OCI-LY7 (cell line): ENCODE measurements at regions of chr4 and their contacts with region 1.

Region 1: GRCh38 chr4:94207469-94208224 is at the start of gene SMARCAD1:
- DNase-seq: peak; percentile 95
- H3K4me3 ChIP-seq: peak within 1 kb of the TSS; percentile 73
- H3K27ac ChIP-seq: peak within 1 kb of the TSS; percentile 69
- H3K4me1 ChIP-seq: peaks cover 15% of the 10 kb centered on the region
- CTCF ChIP-seq: no peak
- total RNA-seq, gene SMARCAD1: 29.9 and 33.9 TPM in 2 replicates

Region 2: DNA sequence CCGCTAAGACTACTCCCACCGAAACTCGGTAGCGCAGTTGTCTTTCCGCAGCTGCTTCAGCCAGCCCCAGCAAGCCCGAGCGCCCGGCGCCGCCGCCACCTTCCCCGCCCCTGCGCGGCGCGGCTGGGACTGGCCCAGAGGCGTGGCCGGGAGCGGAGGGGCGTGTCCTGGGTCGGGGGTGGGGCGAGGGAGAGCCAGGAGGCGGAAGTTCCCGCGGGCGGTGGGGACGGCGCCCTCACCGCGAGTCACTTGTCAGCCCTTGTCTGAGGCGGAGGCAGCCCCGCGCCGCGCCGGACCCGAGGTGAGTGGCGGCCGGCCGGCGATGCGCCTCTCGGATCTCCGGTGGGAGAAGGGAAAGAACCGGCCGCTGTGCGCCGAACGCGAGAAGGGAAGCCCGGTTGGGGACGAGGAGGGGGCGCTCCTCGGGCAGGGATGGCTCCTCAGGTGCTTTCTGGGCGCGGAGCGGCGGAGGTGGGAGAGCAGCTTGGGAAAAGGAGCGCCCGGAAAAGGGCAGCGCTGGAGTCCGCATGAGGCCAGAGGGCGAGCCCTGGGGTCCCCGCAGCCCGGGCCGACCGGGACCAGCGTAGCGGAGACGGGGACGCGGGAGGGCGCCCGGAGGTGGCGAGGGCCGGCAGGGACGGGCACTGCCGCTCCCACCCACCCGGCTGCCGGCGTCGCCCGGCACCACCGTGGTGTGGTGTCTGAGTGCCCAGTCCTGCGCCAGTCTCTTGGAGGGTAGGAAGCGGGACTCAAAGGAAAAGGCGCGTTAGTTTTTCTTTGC is 244.2 kb after region 1 on chr4 and contains the start of gene PDLIM5:
- CTCF ChIA-PET with region 1: no interaction called
- POLR2A ChIA-PET with region 1: no interaction called
- intact Hi-C with region 1: loop called (anchors 5 kb)
- DNase-seq: peak; percentile 92
- H3K4me3 ChIP-seq: peak within 1 kb of the TSS; percentile 81
- H3K27ac ChIP-seq: no peak within 1 kb of the TSS
- H3K4me1 ChIP-seq: peaks cover 19% of the 10 kb centered on the region
- CTCF ChIP-seq: peak; percentile 34; the same call in 1 of the 2 replicates
- total RNA-seq, gene PDLIM5: 6.3 and 10.3 TPM in 2 replicates